ENCODE measurements at regions of chr19 and their contacts with region 1.

Region 1: GRCh38 chr19:43584484-43584883 is 8.9 kb downstream of the PINLYP start:
- DNase-seq: no peak
- H3K4me3 ChIP-seq: no peak overlapping the region
- H3K4me3 Mint-ChIP-seq: no peak overlapping the region
- H3K27ac ChIP-seq: peak overlapping the region in 1 of 2 donors; percentile 63
- H3K27ac Mint-ChIP-seq: peak overlapping the region; percentile 31 to 88 (median 76)
- H3K4me1 ChIP-seq: peaks cover 26 to 29% of the 10 kb centered on the region in 2 donors
- H3K4me1 Mint-ChIP-seq: peaks cover 33% of the 10 kb centered on the region
- H3K27me3 ChIP-seq: no peaks in the 10 kb centered on the region
- H3K27me3 Mint-ChIP-seq: no peaks in the 10 kb centered on the region
- CTCF ChIP-seq: no peak

Region 2: GRCh38 chr19:43532962-43533545 is 51.4 kb before region 1 on chr19 and contains the start of gene ZNF575:
- intact Hi-C with region 1: loop called in 1 of 2 experiments (anchors 5 kb)
- DNase-seq: peak; percentile 64 to 79 (median 66)
- H3K4me3 ChIP-seq: peak within 1 kb of the TSS; percentile 56 to 96 (median 62)
- H3K4me3 Mint-ChIP-seq: peak within 1 kb of the TSS; percentile 97
- H3K27ac ChIP-seq: peak within 1 kb of the TSS; percentile 71 to 84
- H3K27ac Mint-ChIP-seq: peak within 1 kb of the TSS; percentile 93 to 98 (median 97)
- H3K4me1 ChIP-seq: peaks cover 16 to 22% of the 10 kb centered on the region in 2 donors
- H3K4me1 Mint-ChIP-seq: peaks cover 25% of the 10 kb centered on the region
- H3K27me3 ChIP-seq: no peaks in the 10 kb centered on the region
- H3K27me3 Mint-ChIP-seq: peaks cover 0 to 5% (median 0%) of the 10 kb centered on the region in 3 donors
- CTCF ChIP-seq: no peak
- polyA plus RNA-seq, gene ZNF575: 0.25 to 0.79 (median 0.29) TPM

Measured in CD14-positive monocyte (primary cell).